Activated CD4-positive, alpha-beta T cell treated with anti-CD3 and anti-CD28 coated beads for 36 hours (primary cell): ENCODE measurements at regions of chr6 and their contacts with region 1.

Region 1: DNA sequence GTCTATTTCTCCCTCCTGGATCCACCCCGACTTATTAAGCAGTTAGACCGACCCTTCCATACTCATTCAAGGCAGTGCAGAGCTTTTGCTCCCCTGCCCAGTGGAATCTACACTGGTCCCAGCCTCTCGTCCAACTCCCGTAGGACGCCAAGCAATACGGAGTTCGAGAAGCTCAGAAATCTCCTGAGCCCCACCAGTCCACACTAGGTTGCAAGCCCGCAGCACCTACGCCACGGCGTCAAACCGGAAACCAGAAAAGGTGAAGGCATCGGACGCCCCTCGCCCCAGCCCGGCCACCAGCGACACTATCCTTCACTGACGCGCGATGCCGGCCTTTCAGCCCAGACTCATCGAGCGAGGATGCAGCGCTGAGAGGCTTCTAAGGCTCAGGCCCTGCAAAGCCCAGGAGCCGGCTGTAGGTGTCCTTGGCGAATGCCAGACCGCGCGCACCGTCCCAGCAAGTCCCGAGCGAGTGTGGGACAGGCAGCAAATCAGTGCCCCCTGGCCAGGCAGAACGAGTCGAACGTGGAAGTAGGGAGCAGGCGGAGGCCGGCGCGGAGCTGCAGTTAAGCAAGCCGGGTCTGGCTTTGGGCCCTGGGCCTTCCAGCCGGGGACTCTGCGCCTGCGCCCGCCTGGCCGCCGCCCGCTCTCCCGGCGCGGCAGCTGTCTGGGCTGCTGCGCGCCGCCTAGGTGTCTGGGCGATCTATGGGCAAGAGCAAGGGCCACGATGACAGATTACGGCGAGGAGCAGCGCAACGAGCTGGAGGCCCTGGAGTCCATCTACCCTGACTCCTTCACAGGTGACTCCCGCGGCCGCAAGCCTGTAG is at the start of gene RWDD1:
- DNase-seq: peak; percentile 99
- ATAC-seq: peak; percentile 89
- H3K4me3 Mint-ChIP-seq: peak within 1 kb of the TSS; percentile 94
- H3K27ac Mint-ChIP-seq: peak within 1 kb of the TSS; percentile 98
- H3K4me1 Mint-ChIP-seq: peaks cover 39% of the 10 kb centered on the region
- H3K27me3 Mint-ChIP-seq: no peaks in the 10 kb centered on the region
- total RNA-seq, gene RWDD1: 40.0 to 65.4 TPM

Region 2: GRCh38 chr6:116003668-116004067 is 567.4 kb before region 1 on chr6:
- CTCF ChIA-PET with region 1: no interaction called
- POLR2A ChIA-PET with region 1: no interaction called
- intact Hi-C with region 1: no loop called
- DNase-seq: no peak
- ATAC-seq: no peak
- H3K4me3 Mint-ChIP-seq: no peak overlapping the region
- H3K27ac Mint-ChIP-seq: no peak overlapping the region
- H3K4me1 Mint-ChIP-seq: no peaks in the 10 kb centered on the region
- H3K27me3 Mint-ChIP-seq: peaks cover 7% of the 10 kb centered on the region

Region 3: DNA sequence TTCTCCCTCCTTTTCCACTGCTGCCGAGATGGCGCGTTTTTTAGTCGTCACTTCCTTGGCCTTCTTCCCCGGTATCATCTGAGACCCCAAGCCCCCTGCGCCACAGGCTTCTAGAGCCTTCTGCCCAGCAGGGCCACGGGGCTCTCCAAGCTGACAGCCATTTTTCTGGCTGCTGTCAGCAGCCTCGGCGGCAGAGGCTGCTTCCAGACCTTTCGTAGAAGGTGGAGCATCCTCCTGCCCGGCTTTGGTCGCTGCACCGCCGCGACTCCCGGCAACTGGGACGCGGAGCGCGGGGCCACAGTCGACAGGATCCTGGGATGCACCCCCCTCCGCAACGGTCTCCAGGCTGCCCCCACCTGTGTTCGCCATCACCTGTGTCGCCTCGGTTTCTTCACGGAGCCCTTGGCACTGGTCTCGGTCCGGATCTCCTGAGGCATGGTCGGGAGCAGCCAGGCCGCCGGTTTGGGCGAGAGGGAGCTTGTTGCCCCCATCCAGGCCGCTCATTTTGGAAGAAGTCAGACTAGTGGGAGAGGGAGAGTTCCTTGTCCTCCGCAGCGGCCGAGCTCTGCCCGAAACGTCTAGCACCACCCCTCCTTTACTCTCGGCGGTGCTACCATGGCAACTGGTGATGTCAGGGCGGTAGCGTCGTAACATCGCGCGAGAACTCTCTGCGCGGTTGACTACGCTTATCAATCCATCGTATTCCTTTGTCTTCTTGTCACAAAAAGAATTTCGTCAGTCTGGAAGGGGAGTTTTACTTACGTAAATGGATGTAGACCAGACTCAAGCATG is 317.4 kb before region 1 on chr6 and contains the start of gene TSPYL4:
- CTCF ChIA-PET with region 1: interaction called, 3 read pairs
- POLR2A ChIA-PET with region 1: no interaction called
- intact Hi-C with region 1: loop called in 1 of 2 experiments (anchors 1 kb)
- DNase-seq: peak; percentile 95
- ATAC-seq: peak; percentile 99
- H3K4me3 Mint-ChIP-seq: no peak within 1 kb of the TSS
- H3K27ac Mint-ChIP-seq: no peak within 1 kb of the TSS
- H3K4me1 Mint-ChIP-seq: peaks cover 19% of the 10 kb centered on the region
- H3K27me3 Mint-ChIP-seq: no peaks in the 10 kb centered on the region
- total RNA-seq, gene TSPYL4: 9.4 to 10.8 TPM

Region 4: GRCh38 chr6:116444092-116444491 is 127.0 kb before region 1 on chr6:
- CTCF ChIA-PET with region 1: no interaction called
- POLR2A ChIA-PET with region 1: no interaction called
- intact Hi-C with region 1: no loop called
- DNase-seq: no peak
- ATAC-seq: peak; percentile 75
- H3K4me3 Mint-ChIP-seq: no peak overlapping the region
- H3K27ac Mint-ChIP-seq: no peak overlapping the region
- H3K4me1 Mint-ChIP-seq: peaks cover 9% of the 10 kb centered on the region
- H3K27me3 Mint-ChIP-seq: peaks cover 18% of the 10 kb centered on the region

Region 5: GRCh38 chr6:116461932-116462885 is 108.9 kb before region 1 on chr6:
- CTCF ChIA-PET with region 1: no interaction called
- POLR2A ChIA-PET with region 1: no interaction called
- intact Hi-C with region 1: loop called in 1 of 2 experiments (anchors 1 kb)
- DNase-seq: peak; percentile 80
- ATAC-seq: peak; percentile 90
- H3K4me3 Mint-ChIP-seq: peak overlapping the region; percentile 57
- H3K27ac Mint-ChIP-seq: peak overlapping the region; percentile 79
- H3K4me1 Mint-ChIP-seq: peaks cover 34% of the 10 kb centered on the region
- H3K27me3 Mint-ChIP-seq: peaks cover 31% of the 10 kb centered on the region

Region 6: DNA sequence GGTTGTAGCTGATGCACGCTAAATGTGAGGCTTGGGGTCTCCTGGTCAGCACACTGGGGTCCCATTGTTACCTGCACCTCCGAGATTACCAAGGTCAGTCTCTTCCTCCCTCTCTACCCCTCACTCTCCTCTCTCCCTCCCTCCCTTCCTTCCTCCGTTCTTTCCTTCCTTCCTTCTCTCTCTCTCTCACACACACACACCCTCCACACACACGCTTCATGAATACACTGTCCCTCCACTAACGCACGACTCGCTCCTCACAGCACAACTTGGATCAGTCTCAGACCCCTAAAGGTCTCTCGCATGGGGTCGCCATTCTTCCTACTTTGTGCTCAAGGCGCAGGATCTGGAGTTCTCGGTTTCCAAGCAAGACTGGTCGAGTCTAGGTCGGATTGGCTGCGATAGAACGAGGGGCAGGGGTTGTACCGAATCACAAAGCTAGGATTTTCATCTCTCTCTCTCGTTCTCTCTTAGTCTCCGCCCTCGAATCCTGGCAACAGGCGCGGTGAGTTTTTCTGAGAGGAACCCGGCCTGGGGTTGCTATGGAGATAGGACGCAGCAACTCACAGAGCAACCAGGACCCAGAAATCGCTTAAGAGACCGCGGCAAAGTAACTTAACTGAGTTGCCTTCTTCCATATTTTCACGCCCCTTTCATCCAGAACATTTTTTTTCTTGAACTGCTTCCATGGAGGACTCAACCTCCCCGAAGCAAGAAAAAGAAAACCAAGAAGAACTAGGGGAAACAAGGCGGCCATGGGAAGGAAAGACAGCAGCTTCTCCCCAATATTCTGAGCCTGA is 45.1 kb after region 1 on chr6 and contains the start of gene RSPH4A:
- CTCF ChIA-PET with region 1: interaction called, 5 read pairs
- POLR2A ChIA-PET with region 1: no interaction called
- intact Hi-C with region 1: loop called (anchors 1 kb)
- DNase-seq: peak; percentile 85
- ATAC-seq: peak; percentile 99
- H3K4me3 Mint-ChIP-seq: peak within 1 kb of the TSS; percentile 78
- H3K27ac Mint-ChIP-seq: peak within 1 kb of the TSS; percentile 22
- H3K4me1 Mint-ChIP-seq: peaks cover 15% of the 10 kb centered on the region
- H3K27me3 Mint-ChIP-seq: peaks cover 7% of the 10 kb centered on the region
- total RNA-seq, gene RSPH4A: 0.11 TPM in 1 of 2 experiments, not detected in the other

Region 7: DNA sequence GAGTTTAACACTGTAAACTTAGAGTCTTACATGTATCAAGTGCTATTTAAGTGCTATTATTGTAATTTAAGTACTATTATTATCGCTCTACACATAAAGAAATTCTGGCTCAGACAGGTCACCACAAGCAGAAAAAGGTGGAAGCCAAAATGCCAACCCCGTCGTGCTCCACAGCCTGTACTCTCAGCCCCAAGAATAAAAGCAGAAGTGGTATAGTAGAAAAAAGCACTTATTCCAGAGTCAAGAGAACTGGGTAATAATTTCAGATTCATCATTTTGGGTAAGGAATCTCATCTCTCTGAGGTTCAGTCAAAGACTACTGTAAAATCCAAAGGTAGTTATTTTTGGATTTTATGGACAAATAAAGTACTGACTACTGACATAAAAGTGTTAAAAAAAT is 96.6 kb after region 1 on chr6:
- CTCF ChIA-PET with region 1: interaction called, 3 read pairs
- POLR2A ChIA-PET with region 1: no interaction called
- intact Hi-C with region 1: loop called (anchors 1 to 5 kb)
- DNase-seq: no peak
- ATAC-seq: no peak
- H3K4me3 Mint-ChIP-seq: peak overlapping the region; percentile 89
- H3K27ac Mint-ChIP-seq: peak overlapping the region; percentile 96
- H3K4me1 Mint-ChIP-seq: peaks cover 38% of the 10 kb centered on the region
- H3K27me3 Mint-ChIP-seq: no peaks in the 10 kb centered on the region

Region 8: GRCh38 chr6:117674991-117675657 is 1104.1 kb after region 1 on chr6 and contains the start of gene NUS1:
- CTCF ChIA-PET with region 1: no interaction called
- POLR2A ChIA-PET with region 1: no interaction called
- intact Hi-C with region 1: loop called in 1 of 2 experiments (anchors 2 kb)
- DNase-seq: peak; percentile 98
- ATAC-seq: peak; percentile 96
- H3K4me3 Mint-ChIP-seq: peak within 1 kb of the TSS; percentile 80
- H3K27ac Mint-ChIP-seq: peak within 1 kb of the TSS; percentile 92
- H3K4me1 Mint-ChIP-seq: peaks cover 46% of the 10 kb centered on the region
- H3K27me3 Mint-ChIP-seq: no peaks in the 10 kb centered on the region
- total RNA-seq, gene NUS1: 34.0 to 38.3 TPM